PC-3 (cell line): ENCODE measurements at regions of chr4 and their contacts with region 1.

Region 1: GRCh38 chr4:53321151-53321983 is 44.5 kb downstream of the SCFD2 start:
- DNase-seq: peak; percentile 70
- ATAC-seq: peak; percentile 84
- H3K4me3 ChIP-seq: peak overlapping the region; percentile 37; the same call in 1 of the 2 replicates
- H3K27ac ChIP-seq: peak overlapping the region; percentile 77
- H3K4me1 ChIP-seq: peaks cover 28% of the 10 kb centered on the region
- H3K27me3 ChIP-seq: no peaks in the 10 kb centered on the region
- CTCF ChIP-seq: no peak

Region 2: DNA sequence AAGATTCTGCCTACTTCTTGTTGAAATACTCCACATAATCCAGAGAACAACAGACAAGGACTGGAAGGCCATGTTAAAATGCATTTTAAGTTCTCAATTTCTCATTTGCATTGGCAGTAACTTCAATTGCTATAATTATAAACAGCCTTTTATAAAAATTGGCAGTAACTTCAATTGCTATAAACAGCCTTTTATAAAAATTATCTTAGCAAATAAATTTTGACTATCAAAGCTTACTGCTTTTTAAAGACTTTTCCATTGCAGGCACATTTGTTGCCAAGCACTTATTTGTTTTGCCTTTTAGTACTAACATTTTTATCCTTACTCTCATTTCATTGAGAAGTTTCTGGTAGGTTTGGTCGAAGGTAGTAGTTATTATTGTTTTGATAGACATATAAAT is 26.7 kb after region 1 on chr4:
- CTCF ChIA-PET with region 1: no interaction called
- POLR2A ChIA-PET with region 1: no interaction called
- intact Hi-C with region 1: loop called (anchors 1 kb)
- DNase-seq: no peak
- ATAC-seq: no peak
- H3K4me3 ChIP-seq: no peak overlapping the region
- H3K27ac ChIP-seq: 0 out of 2 replicates have a peak overlapping the region, but pooled peaks have one; percentile 12
- H3K4me1 ChIP-seq: peaks cover 9% of the 10 kb centered on the region
- H3K27me3 ChIP-seq: no peaks in the 10 kb centered on the region
- CTCF ChIP-seq: no peak

Region 3: DNA sequence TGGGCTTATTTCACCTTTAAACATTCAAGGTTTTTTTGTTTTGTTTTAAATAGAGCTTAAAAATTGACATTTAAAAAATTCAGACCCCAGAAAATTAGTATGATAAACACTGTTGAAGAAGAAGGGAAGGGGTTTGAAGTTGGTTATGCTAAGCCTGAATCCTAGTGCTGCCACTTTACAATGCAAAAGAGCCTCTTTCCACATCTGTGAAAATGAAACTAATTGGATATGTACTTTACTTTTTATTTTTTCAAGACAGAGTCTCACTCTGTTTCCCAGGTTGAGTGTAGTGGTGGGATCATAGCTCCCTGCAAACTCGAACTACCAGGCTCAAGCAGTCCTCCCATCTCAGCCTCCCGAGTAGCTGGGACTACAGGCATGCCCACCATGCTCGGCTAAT is 97.8 kb after region 1 on chr4:
- CTCF ChIA-PET with region 1: no interaction called
- POLR2A ChIA-PET with region 1: no interaction called
- intact Hi-C with region 1: no loop called
- DNase-seq: no peak
- ATAC-seq: no peak
- H3K4me3 ChIP-seq: no peak overlapping the region
- H3K27ac ChIP-seq: no peak overlapping the region
- H3K4me1 ChIP-seq: no peaks in the 10 kb centered on the region
- H3K27me3 ChIP-seq: no peaks in the 10 kb centered on the region
- CTCF ChIP-seq: no peak

Region 4: DNA sequence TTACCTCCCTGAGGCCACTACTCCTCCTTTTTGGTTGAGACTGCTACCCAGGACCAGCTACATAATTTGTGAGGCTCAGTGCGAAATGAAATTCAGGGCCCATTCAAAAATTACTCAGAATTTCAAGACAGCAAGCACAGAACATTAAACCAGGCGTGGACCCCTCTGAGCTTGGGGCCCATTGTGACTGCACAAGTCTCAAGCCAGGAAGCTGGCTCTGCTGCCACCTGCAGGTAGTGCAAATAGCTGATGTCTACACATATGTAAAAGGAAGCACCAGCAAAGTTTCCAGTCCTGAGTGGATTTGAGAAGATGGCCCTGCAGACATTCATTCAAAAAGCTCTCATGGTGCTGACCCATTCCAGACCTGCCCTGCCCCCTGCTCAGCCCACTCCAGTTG is 483.4 kb after region 1 on chr4:
- CTCF ChIA-PET with region 1: no interaction called
- POLR2A ChIA-PET with region 1: no interaction called
- intact Hi-C with region 1: no loop called
- DNase-seq: peak; percentile 70
- ATAC-seq: peak; percentile 43
- H3K4me3 ChIP-seq: no peak overlapping the region
- H3K27ac ChIP-seq: no peak overlapping the region
- H3K4me1 ChIP-seq: peaks cover 10% of the 10 kb centered on the region; the same call in 1 of the 2 replicates
- H3K27me3 ChIP-seq: no peaks in the 10 kb centered on the region
- CTCF ChIP-seq: peak; percentile 86